ENCODE measurements at regions of chr4 and their contacts with region 1.

Region 1: GRCh38 chr4:173420324-173420752 is 21.4 kb upstream of the SCRG1 start:
- DNase-seq: no peak
- H3K4me3 ChIP-seq: no peak overlapping the region
- H3K27ac ChIP-seq: no peak overlapping the region
- H3K27me3 ChIP-seq: no peaks in the 10 kb centered on the region
- CTCF ChIP-seq: peak; percentile 50

Region 2: GRCh38 chr4:173318648-173319211 is 101.6 kb before region 1 on chr4:
- CTCF ChIA-PET with region 1: interaction called, 248 read pairs
- POLR2A ChIA-PET with region 1: no interaction called
- DNase-seq: no peak
- H3K4me3 ChIP-seq: no peak overlapping the region
- H3K27ac ChIP-seq: no peak overlapping the region
- H3K27me3 ChIP-seq: no peaks in the 10 kb centered on the region
- CTCF ChIP-seq: peak; percentile 27; the same call in 1 of the 2 replicates

Region 3: DNA sequence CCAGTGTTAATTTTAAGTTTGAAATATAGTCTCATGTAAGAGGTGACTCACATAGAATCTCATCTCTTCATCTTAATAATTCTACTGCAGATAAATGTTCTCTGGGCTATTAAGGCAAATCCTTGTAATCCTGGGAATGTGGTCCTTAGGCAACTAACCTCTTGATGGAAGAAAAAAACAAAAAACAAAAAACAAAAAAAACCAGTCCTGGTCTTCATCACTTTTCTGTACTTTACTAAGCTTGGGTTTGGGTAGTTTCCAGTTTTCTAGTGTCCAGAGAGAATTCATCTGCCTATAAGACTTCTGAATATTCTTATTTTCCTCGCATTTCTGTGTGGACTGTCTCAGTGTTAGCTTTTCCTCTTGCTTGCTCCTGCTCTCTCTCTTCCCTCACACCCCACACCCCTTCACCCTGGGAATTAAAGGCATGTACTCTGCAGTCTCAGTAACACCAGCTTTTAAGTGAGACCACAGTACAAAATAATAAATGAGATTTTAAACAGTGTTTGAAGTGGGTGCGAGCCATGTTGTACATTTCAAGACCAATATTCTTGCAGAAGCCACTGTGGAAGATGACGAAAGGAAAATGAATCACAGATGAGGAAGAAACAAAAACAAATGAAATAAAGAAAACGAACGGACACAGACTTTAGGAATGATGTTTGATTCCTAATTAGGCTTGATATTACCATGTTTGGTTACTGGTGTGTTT is 58.0 kb after region 1 on chr4:
- CTCF ChIA-PET with region 1: interaction called, 12 read pairs
- POLR2A ChIA-PET with region 1: no interaction called
- DNase-seq: no peak
- H3K4me3 ChIP-seq: no peak overlapping the region
- H3K27ac ChIP-seq: no peak overlapping the region
- H3K27me3 ChIP-seq: no peaks in the 10 kb centered on the region
- CTCF ChIP-seq: no peak

Region 4: GRCh38 chr4:173505924-173506518 is 85.7 kb after region 1 on chr4:
- CTCF ChIA-PET with region 1: interaction called, 14 read pairs
- POLR2A ChIA-PET with region 1: no interaction called
- DNase-seq: no peak
- H3K4me3 ChIP-seq: no peak overlapping the region
- H3K27ac ChIP-seq: no peak overlapping the region
- H3K27me3 ChIP-seq: peaks cover 70% of the 10 kb centered on the region
- CTCF ChIP-seq: peak; percentile 85

Region 5: GRCh38 chr4:174107746-174108354 is 687.5 kb after region 1 on chr4:
- CTCF ChIA-PET with region 1: interaction called, 14 read pairs
- POLR2A ChIA-PET with region 1: no interaction called
- DNase-seq: no peak
- H3K4me3 ChIP-seq: no peak overlapping the region
- H3K27ac ChIP-seq: no peak overlapping the region
- H3K27me3 ChIP-seq: no peaks in the 10 kb centered on the region
- CTCF ChIP-seq: no peak

Measured in AG04450 (cell line).